ENCODE measurements at regions of chr3 and their contacts with region 1.

Region 1: DNA sequence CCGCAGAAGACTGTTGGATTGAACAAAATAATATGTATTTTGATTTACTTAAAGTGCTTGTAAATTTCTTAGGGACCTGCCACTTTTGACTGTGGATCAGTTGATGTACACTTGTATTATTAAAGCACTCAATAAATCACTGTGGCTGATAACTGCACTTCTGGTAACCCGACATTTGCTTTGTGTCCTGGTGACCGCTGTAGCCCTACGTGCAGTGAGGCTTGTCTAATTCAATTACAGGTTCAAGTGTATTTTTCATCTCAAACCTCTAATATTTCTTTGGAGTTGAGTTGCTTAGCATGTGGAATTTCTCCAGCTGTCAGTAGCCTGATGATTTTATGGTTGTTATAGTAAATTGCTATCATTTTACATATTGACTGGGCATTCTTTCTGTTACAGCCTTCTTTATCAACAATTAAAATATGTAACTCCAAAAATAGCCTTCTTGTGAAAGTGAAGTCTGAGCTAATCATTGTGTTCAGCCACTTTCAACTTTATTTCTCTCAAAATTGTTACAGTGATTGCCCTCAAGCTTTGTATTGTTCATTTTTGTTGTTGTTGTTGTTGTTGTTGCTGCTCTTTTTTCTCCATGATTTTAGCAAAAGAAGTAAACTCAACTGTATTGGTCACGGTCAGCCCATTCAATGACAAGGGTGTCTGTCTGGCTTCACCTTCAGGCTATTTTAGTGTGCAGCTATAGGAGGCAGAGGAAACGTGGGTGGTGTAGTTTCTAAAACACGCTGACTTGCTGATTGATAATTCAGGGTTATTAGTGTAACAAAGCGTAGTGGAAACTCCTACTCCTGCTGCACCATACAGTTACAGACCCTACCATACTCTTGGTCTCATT is 215.1 kb upstream of the UBE2E1 start:
- DNase-seq: peak; percentile 78
- ATAC-seq: peak; percentile 80
- H3K4me3 ChIP-seq: no peak overlapping the region
- H3K27ac ChIP-seq: peak overlapping the region; percentile 17; the same call in 1 of the 2 replicates
- H3K4me1 ChIP-seq: peaks cover 37% of the 10 kb centered on the region
- H3K27me3 ChIP-seq: no peaks in the 10 kb centered on the region
- CTCF ChIP-seq: no peak
- EP300 ChIP-seq: peak in 1 of 2 experiments; percentile 83; a peak in 3 of 4 replicates
- POLR2A ChIP-seq: no peak
- RAD21 ChIP-seq: peak; percentile 27

Region 2: DNA sequence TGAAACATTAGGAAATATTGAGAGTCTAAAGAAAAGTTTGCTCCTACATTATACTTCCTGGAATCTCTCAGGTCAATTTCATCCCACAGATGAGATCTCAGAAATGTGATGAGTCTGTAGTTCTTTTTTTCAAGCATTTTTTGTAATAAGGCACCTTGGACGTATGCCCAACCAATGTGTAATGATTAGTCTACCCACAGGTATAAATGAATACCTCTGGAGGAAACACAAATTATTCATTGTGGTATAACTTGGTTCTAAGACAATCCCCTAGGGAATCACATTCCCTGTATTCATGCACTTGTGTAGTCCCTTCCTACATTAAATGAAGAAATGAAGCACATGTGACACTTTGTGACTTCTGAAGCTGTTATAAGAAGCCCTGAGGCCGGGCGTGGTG is 983.7 kb before region 1 on chr3:
- CTCF ChIA-PET with region 1: no interaction called
- POLR2A ChIA-PET with region 1: no interaction called
- RAD21 ChIA-PET with region 1: no interaction called
- SMC1A ChIA-PET with region 1: no interaction called
- in situ Hi-C with region 1: no loop called
- intact Hi-C with region 1: no loop called
- DNase-seq: no peak
- ATAC-seq: no peak
- H3K4me3 ChIP-seq: no peak overlapping the region
- H3K27ac ChIP-seq: no peak overlapping the region
- H3K4me1 ChIP-seq: no peaks in the 10 kb centered on the region
- H3K27me3 ChIP-seq: no peaks in the 10 kb centered on the region
- CTCF ChIP-seq: no peak
- EP300 ChIP-seq: no peak
- POLR2A ChIP-seq: no peak
- RAD21 ChIP-seq: no peak

Region 3: GRCh38 chr3:23202921-23203707 is 387.5 kb before region 1 on chr3 and contains the start of gene UBE2E2:
- CTCF ChIA-PET with region 1: no interaction called
- POLR2A ChIA-PET with region 1: no interaction called
- RAD21 ChIA-PET with region 1: interaction called, 5 read pairs
- SMC1A ChIA-PET with region 1: interaction called, 18 read pairs
- in situ Hi-C with region 1: no loop called
- intact Hi-C with region 1: loop called (anchors 5 kb)
- DNase-seq: no peak
- ATAC-seq: peak; percentile 77
- H3K4me3 ChIP-seq: peak within 1 kb of the TSS; percentile 92
- H3K27ac ChIP-seq: peak within 1 kb of the TSS; percentile 59
- H3K4me1 ChIP-seq: no peaks in the 10 kb centered on the region
- H3K27me3 ChIP-seq: no peaks in the 10 kb centered on the region
- CTCF ChIP-seq: no peak
- EP300 ChIP-seq: peak in 1 of 2 experiments; percentile 22; a peak in 1 of 4 replicates
- POLR2A ChIP-seq: peak; percentile 75
- RAD21 ChIP-seq: peak; percentile 22; the same call in 1 of the 2 replicates
- polyA plus RNA-seq, gene UBE2E2: 8.7 to 15.0 TPM

Region 4: DNA sequence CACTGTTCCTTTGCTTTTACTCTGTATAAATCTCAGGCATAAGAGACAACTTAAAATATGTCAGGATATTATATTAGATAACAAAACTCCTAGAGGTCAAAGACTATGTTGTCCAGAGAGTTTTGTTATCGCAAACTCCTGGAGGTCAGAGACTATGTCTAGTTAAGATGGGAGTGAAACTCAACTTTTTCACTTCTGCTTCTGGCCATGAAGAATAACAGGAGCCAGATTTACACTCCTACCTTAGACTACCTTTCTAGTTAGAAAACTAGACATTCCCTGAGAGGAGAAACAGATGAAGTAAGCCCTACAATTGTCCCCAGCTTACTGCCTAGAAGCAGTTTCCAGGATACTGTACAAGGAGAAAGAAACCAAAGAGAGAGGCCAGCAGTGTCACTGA is 40.2 kb before region 1 on chr3:
- CTCF ChIA-PET with region 1: no interaction called
- POLR2A ChIA-PET with region 1: interaction called, 5 read pairs
- RAD21 ChIA-PET with region 1: interaction called, 9 read pairs
- SMC1A ChIA-PET with region 1: interaction called, 16 read pairs
- in situ Hi-C with region 1: no loop called
- intact Hi-C with region 1: no loop called
- DNase-seq: peak; percentile 39
- ATAC-seq: peak; percentile 90
- H3K4me3 ChIP-seq: no peak overlapping the region
- H3K27ac ChIP-seq: no peak overlapping the region
- H3K4me1 ChIP-seq: peaks cover 11% of the 10 kb centered on the region
- H3K27me3 ChIP-seq: no peaks in the 10 kb centered on the region
- CTCF ChIP-seq: no peak
- EP300 ChIP-seq: peak in 1 of 2 experiments; percentile 62; a peak in 1 of 4 replicates
- POLR2A ChIP-seq: no peak
- RAD21 ChIP-seq: no peak

Region 5: GRCh38 chr3:23602971-23603370 is 12.3 kb after region 1 on chr3:
- CTCF ChIA-PET with region 1: interaction called, 3 read pairs
- POLR2A ChIA-PET with region 1: interaction called, 3 read pairs
- RAD21 ChIA-PET with region 1: interaction called, 3 read pairs
- SMC1A ChIA-PET with region 1: interaction called, 10 read pairs
- in situ Hi-C with region 1: no loop called
- intact Hi-C with region 1: no loop called
- DNase-seq: no peak
- ATAC-seq: peak; percentile 57
- H3K4me3 ChIP-seq: no peak overlapping the region
- H3K27ac ChIP-seq: no peak overlapping the region
- H3K4me1 ChIP-seq: no peaks in the 10 kb centered on the region
- H3K27me3 ChIP-seq: no peaks in the 10 kb centered on the region
- CTCF ChIP-seq: no peak
- EP300 ChIP-seq: no peak
- POLR2A ChIP-seq: no peak
- RAD21 ChIP-seq: no peak

Region 6: DNA sequence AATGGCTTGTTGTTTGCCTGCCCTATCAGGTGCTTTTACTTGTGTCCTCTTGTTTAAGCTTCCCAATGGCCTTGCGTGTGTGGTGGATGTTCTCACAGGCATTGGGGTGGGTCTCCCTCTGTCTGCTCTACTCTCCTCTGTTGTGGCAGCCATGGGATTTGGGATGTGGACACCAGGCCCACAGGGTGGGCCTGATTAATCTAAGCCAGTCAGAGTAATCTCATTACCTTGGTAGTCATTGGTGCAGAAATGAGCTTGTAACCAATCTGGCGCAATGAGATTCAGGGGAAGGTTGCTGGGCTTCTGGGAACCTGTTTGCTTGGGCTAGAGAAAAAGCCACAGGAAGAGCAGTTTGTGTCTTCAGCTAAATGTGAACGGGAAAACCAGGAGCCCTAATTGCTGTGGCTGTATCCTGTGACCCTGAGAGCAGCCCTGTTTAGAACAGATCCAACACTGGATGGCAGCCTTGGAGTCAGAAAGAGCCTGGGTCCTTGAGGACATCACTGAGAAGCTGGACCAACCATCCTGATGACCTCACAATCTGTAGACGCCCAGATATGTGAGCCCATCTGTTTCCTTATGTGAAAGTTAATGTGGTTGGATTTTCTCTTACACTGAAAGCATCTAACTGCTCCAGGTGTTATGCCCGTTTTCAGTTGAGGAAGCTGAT is 57.8 kb after region 1 on chr3:
- CTCF ChIA-PET with region 1: interaction called, 8 read pairs
- POLR2A ChIA-PET with region 1: interaction called, 6 read pairs
- RAD21 ChIA-PET with region 1: interaction called, 27 read pairs
- SMC1A ChIA-PET with region 1: interaction called, 23 read pairs
- in situ Hi-C with region 1: no loop called
- intact Hi-C with region 1: loop called (anchors 5 kb)
- DNase-seq: no peak
- ATAC-seq: peak; percentile 20
- H3K4me3 ChIP-seq: no peak overlapping the region
- H3K27ac ChIP-seq: no peak overlapping the region
- H3K4me1 ChIP-seq: peaks cover 26% of the 10 kb centered on the region
- H3K27me3 ChIP-seq: no peaks in the 10 kb centered on the region
- CTCF ChIP-seq: peak in 1 of 3 experiments; percentile 7; a peak in 1 of 6 replicates
- EP300 ChIP-seq: no peak
- POLR2A ChIP-seq: no peak
- RAD21 ChIP-seq: peak; percentile 43; the same call in 1 of the 2 replicates

Region 7: DNA sequence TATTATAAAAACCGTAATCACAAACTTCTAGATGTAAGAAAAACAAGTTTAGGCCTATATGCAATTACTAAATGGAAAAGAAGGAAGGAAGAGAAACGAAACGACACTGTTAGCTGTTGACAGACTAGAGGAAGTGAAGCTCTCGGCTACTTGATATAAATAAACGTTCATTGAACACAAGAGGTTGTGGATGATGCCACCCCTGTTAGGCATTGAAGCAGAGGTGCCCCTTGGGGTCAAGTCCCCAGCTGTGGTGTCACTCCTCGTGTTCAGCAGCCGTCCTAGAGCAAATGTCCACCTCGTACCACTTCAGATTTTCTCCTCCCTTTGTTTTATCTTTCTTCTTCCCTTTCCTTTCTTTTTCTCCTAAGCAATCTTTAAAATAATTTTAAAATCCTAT is 68.6 kb after region 1 on chr3:
- CTCF ChIA-PET with region 1: interaction called, 8 read pairs
- POLR2A ChIA-PET with region 1: interaction called, 12 read pairs
- RAD21 ChIA-PET with region 1: interaction called, 19 read pairs
- SMC1A ChIA-PET with region 1: interaction called, 24 read pairs
- in situ Hi-C with region 1: no loop called
- intact Hi-C with region 1: loop called (anchors 5 kb)
- DNase-seq: peak; percentile 60
- ATAC-seq: peak; percentile 88
- H3K4me3 ChIP-seq: no peak overlapping the region
- H3K27ac ChIP-seq: peak overlapping the region; percentile 81
- H3K4me1 ChIP-seq: peaks cover 36% of the 10 kb centered on the region
- H3K27me3 ChIP-seq: no peaks in the 10 kb centered on the region
- CTCF ChIP-seq: no peak
- EP300 ChIP-seq: peak; percentile 36 to 56; a peak in 1 of 4 replicates
- POLR2A ChIP-seq: no peak
- RAD21 ChIP-seq: no peak

Measured in GM12878 (cell line).